Mammary epithelial cell (primary cell): ENCODE measurements at regions of chr2 and their contacts with region 1.

Region 1: DNA sequence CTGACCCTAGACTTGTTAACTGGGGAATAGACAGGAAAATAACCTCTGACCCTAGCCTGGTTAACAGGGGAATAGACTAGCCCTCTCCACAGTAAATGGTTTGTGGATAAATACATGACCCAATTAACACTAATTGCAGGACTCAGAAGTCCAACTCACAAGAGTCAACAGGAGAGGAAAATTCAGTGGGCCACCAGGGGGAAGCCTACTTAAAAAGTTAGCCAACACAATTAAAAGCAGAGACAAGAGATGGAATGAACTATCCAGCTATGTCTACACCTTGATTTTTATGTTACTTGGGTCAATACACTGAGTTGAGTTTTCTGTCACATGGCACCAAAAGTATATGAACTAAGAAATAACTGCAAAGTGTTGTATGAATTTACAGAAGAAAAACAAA is 158.8 kb upstream of the SLC39A10 start:
- DNase-seq: peak; percentile 26
- H3K4me3 ChIP-seq: no peak overlapping the region
- H3K27ac ChIP-seq: no peak overlapping the region
- H3K4me1 ChIP-seq: peaks cover 10% of the 10 kb centered on the region
- H3K27me3 ChIP-seq: no peaks in the 10 kb centered on the region
- CTCF ChIP-seq: peak; percentile 25 to 45

Region 2: GRCh38 chr2:195451160-195451559 is 47.0 kb before region 1 on chr2:
- CTCF ChIA-PET with region 1: no interaction called
- dilution Hi-C with region 1: no loop called
- in situ Hi-C with region 1: no loop called
- intact Hi-C with region 1: no loop called
- DNase-seq: no peak
- H3K4me3 ChIP-seq: no peak overlapping the region
- H3K27ac ChIP-seq: no peak overlapping the region
- H3K4me1 ChIP-seq: no peaks in the 10 kb centered on the region
- H3K27me3 ChIP-seq: no peaks in the 10 kb centered on the region
- CTCF ChIP-seq: no peak

Region 3: DNA sequence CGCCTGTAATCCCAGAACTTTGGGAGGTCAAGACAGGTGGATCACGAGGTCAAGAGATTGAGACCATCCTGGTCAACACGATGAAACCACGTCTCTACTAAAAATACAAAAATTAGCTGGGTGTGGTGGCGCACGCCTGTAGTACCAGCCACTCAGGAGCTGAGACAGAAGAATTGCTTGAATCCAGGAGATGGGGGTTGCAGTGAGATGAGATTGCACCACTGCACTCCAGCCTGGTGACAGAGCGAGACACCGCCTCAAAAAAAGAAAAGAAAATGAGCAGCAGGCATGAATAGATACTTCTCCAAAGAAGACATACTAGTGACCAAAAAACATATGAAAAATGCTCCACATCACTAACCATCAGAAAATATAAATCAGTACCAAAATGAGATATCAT is 431.9 kb after region 1 on chr2:
- CTCF ChIA-PET with region 1: no interaction called
- dilution Hi-C with region 1: no loop called
- in situ Hi-C with region 1: no loop called
- intact Hi-C with region 1: loop called (anchors 10 kb)
- DNase-seq: no peak
- H3K4me3 ChIP-seq: no peak overlapping the region
- H3K27ac ChIP-seq: no peak overlapping the region
- H3K4me1 ChIP-seq: no peaks in the 10 kb centered on the region
- H3K27me3 ChIP-seq: no peaks in the 10 kb centered on the region
- CTCF ChIP-seq: no peak